Activated B cell treated with CpG ODN at 0.5 μM for 24 hours (primary cell): ENCODE measurements at regions of chr10 and their contacts with region 1.

Region 1: DNA sequence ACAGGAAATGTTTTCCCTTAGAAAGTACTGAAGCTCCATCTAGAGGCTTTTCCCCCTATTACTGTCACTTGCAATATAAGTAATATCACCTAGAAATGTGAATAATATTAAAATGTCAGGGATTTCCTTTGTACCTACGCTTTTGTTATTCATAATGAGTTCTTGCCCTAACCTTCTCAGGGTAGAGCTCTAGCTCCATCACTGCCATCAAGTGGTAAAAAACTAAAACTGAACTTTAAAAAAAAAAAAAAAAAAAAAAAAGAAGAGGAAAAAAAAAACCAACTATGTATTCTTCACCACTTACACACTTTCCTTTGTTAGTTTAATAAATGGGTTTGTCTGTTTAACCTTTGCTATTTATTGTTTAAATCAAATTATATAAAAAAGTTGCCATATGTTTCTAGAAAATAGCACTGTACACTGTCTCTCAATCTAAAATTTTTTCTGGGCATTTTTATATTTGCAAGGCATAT is 49.9 kb downstream of the DNAJC1 start:
- DNase-seq: no peak
- ATAC-seq: peak; percentile 42
- H3K4me3 Mint-ChIP-seq: no peak overlapping the region
- H3K27ac Mint-ChIP-seq: no peak overlapping the region
- H3K4me1 Mint-ChIP-seq: peaks cover 9% of the 10 kb centered on the region
- H3K27me3 Mint-ChIP-seq: no peaks in the 10 kb centered on the region
- CTCF ChIP-seq: no peak

Region 2: GRCh38 chr10:20858292-20859124 is 1095.1 kb before region 1 on chr10:
- CTCF ChIA-PET with region 1: no interaction called
- POLR2A ChIA-PET with region 1: no interaction called
- intact Hi-C with region 1: loop called (anchors 5 kb)
- DNase-seq: no peak
- ATAC-seq: no peak
- H3K4me3 Mint-ChIP-seq: no peak overlapping the region
- H3K27ac Mint-ChIP-seq: no peak overlapping the region
- H3K4me1 Mint-ChIP-seq: no peaks in the 10 kb centered on the region
- H3K27me3 Mint-ChIP-seq: peaks cover 2% of the 10 kb centered on the region
- CTCF ChIP-seq: no peak

Region 3: GRCh38 chr10:21078410-21079329 is 875.0 kb before region 1 on chr10:
- CTCF ChIA-PET with region 1: no interaction called
- POLR2A ChIA-PET with region 1: no interaction called
- intact Hi-C with region 1: loop called (anchors 5 kb)
- DNase-seq: no peak
- ATAC-seq: no peak
- H3K4me3 Mint-ChIP-seq: no peak overlapping the region
- H3K27ac Mint-ChIP-seq: no peak overlapping the region
- H3K4me1 Mint-ChIP-seq: no peaks in the 10 kb centered on the region
- H3K27me3 Mint-ChIP-seq: peaks cover 1% of the 10 kb centered on the region
- CTCF ChIP-seq: no peak

Region 4: DNA sequence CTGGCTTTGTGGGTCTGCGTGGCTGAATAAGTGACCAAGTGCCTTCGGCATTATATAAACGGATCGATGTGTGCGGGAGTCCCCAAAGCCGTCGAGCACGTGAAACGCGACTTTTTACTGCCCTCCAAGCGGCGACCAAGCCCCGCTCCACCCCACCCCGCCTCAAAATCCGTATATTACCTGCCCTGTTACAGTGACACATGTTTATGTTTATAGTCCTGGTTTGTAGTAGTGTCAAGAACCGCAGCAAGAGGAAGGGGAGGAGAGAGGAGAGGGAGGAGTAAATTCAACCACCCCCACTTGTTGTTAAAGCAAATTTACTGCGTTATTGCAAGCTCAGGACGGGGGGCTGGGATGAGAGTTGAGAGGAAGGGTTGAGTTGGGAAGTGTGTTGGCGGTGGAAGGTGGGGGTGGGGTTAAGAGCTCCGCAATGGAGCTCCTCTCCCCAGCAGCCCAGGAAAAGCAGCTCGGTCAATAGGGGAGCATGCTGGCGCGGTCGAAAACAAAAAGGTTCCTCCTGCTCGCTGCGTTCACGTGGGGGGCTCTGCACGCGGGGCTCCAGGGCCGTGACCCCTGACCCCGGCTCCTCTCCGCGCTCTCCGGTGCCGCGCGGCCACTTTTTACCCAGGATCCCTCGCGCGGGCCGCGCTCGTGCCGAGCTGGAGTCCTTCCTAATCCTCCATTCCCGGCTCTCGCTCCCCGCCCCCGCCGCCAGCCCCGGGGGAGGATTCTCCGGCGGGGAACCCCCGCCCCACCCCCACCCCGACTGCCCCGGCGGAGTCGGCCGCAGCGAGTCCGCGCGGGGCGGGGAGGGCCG is 428.0 kb before region 1 on chr10 and contains the start of gene SKIDA1:
- CTCF ChIA-PET with region 1: no interaction called
- POLR2A ChIA-PET with region 1: no interaction called
- intact Hi-C with region 1: loop called (anchors 10 kb)
- DNase-seq: peak; percentile 35
- ATAC-seq: peak; percentile 65
- H3K4me3 Mint-ChIP-seq: peak within 1 kb of the TSS; percentile 89
- H3K27ac Mint-ChIP-seq: peak within 1 kb of the TSS; percentile 88
- H3K4me1 Mint-ChIP-seq: peaks cover 27% of the 10 kb centered on the region
- H3K27me3 Mint-ChIP-seq: peaks cover 37% of the 10 kb centered on the region
- CTCF ChIP-seq: no peak
- total RNA-seq, gene SKIDA1: 0.60 TPM in 1 of 2 replicates, not detected in the other

Region 5: GRCh38 chr10:21732067-21732772 is 221.4 kb before region 1 on chr10:
- CTCF ChIA-PET with region 1: no interaction called
- POLR2A ChIA-PET with region 1: no interaction called
- intact Hi-C with region 1: loop called (anchors 10 kb)
- DNase-seq: no peak
- ATAC-seq: peak; percentile 58
- H3K4me3 Mint-ChIP-seq: no peak overlapping the region
- H3K27ac Mint-ChIP-seq: no peak overlapping the region
- H3K4me1 Mint-ChIP-seq: no peaks in the 10 kb centered on the region
- H3K27me3 Mint-ChIP-seq: no peaks in the 10 kb centered on the region
- CTCF ChIP-seq: no peak